IMR-90 (cell line): ENCODE measurements at regions of chrX and their contacts with region 1.

Region 1: DNA sequence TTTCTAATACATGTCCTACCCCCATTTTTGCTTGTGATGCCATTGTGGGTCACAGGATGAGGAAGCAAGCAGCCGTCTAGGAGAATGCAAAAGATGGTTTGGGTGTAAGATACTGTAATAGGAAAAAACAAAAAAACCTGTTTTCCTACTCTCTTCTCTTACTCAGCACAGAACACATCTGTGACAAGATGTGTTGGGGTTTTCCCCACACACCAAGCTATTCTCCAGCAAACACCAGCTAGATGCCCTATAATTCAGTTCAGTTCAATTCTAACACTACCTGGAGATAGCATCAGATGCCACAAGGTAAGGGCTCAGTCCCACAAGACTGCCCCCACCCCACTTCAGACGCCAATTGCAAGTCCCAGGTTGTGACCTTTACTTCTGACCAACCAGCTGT is 15.3 kb upstream of the HPRT1 start:
- DNase-seq: no peak
- ATAC-seq: no peak
- H3K4me3 ChIP-seq: no peak overlapping the region
- H3K27ac ChIP-seq: no peak overlapping the region
- H3K4me1 ChIP-seq: no peaks in the 10 kb centered on the region
- H3K27me3 ChIP-seq: no peaks in the 10 kb centered on the region
- CTCF ChIP-seq: no peak
- POLR2A ChIP-seq: no peak
- RAD21 ChIP-seq: no peak

Region 2: DNA sequence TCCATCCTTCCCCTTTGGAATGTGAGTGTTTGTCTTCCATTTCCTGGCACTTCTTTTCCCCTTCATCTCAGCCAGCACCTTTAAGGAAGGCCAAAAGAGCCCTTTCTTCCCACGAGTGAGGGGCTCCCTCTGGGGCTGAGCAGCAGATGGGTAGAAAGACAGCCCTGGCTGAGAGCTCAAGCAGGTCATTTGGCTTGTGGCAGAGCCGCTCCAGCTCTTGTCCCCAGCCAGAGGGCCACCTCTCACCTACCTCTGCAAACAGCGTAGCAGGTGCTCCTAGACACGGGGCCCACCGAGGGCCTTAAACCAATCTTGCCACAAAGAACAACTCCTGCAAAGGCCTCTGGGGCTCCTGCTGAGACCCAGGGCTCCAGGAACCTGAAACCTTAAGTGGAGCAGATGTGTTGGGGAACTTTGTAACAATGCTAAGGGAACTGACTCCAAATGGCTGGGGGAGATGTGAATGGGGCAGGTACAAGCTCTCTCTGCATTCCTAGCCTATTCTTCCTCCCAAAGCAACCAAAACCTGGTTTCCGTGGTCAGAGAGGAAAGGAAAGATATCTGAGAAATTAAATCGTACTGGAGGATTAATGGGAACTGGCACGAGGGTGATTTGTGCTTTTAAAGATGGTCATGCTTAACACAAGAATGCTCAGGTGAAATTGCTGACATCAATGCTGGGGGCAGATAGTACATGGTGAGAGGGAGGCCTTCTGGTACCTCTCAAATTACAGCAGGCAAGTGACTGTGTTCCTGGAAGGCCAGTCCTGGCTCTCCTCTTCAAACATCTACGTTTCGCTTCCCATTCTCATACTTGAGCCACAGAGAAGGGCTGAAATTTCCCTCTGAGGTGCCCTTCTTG is 1253.6 kb before region 1 on chrX:
- CTCF ChIA-PET with region 1: no interaction called
- POLR2A ChIA-PET with region 1: no interaction called
- dilution Hi-C with region 1: no loop called
- in situ Hi-C with region 1: no loop called
- intact Hi-C with region 1: no loop called
- DNase-seq: no peak
- ATAC-seq: no peak
- H3K4me3 ChIP-seq: no peak overlapping the region
- H3K27ac ChIP-seq: no peak overlapping the region
- H3K4me1 ChIP-seq: no peaks in the 10 kb centered on the region
- H3K27me3 ChIP-seq: peaks cover 1% of the 10 kb centered on the region; the same call in 1 of the 2 replicates
- CTCF ChIP-seq: no peak
- POLR2A ChIP-seq: no peak
- RAD21 ChIP-seq: no peak

Region 3: GRCh38 chrX:134469486-134469885 is 24.8 kb after region 1 on chrX:
- CTCF ChIA-PET with region 1: interaction called, 8 read pairs
- POLR2A ChIA-PET with region 1: interaction called, 14 read pairs
- dilution Hi-C with region 1: no loop called
- in situ Hi-C with region 1: no loop called
- intact Hi-C with region 1: no loop called
- DNase-seq: peak; percentile 71
- ATAC-seq: peak; percentile 80
- H3K4me3 ChIP-seq: no peak overlapping the region
- H3K27ac ChIP-seq: no peak overlapping the region
- H3K4me1 ChIP-seq: peaks cover 2% of the 10 kb centered on the region; the same call in 1 of the 2 replicates
- H3K27me3 ChIP-seq: no peaks in the 10 kb centered on the region
- CTCF ChIP-seq: no peak
- POLR2A ChIP-seq: no peak
- RAD21 ChIP-seq: no peak